ENCODE measurements at regions of chr9 and their contacts with region 1.

Region 1: DNA sequence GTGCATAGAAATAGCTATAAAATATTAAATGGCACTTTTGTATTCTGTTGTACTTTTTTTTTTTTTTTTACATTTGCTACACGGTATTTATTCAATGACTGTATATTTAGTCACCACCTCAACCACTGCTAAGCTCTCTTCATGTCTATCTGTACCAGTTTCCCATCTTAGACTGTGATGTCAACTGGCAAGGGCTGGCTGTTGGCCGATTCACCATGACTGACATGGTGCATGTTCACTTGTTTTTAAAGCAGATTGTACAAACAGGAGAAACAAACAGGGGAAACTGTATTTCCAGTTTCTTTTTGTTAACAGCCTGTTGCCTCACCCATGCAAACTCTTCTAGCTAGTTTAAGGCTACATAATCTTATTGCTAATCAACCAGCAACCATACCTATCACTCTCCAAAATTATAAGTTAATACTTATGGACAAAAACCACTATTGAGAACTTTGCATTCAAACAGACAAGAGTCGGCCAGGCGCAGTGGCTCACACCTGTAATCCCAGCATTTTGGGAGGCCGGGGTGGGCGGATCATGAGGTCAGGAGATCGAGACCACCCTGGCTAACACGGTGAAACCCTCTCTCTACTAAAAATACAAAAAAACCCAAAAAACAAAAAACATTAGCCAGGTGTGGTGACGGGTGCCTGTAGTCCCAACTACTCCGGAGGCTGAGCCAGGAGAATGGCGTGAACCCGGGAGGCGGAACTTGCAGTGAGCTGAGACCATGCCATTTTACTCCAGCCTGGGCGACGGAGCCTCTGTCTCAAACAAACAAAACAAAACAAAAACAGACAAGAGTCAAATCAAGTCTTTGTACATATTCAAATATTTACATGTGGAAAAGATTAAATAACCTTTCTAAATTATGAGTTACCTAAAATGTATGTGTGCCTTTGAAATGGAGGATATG is 13.2 kb downstream of the ZFAND5 start:
- DNase-seq: peak; percentile 28 to 66
- H3K4me3 ChIP-seq: no peak overlapping the region
- H3K27ac ChIP-seq: peak overlapping the region; percentile 16
- H3K4me1 ChIP-seq: 0 out of 2 replicates have a peak, but pooled peaks cover 9% of the 10 kb centered on the region
- H3K27me3 ChIP-seq: no peaks in the 10 kb centered on the region
- CTCF ChIP-seq: no peak

Region 2: DNA sequence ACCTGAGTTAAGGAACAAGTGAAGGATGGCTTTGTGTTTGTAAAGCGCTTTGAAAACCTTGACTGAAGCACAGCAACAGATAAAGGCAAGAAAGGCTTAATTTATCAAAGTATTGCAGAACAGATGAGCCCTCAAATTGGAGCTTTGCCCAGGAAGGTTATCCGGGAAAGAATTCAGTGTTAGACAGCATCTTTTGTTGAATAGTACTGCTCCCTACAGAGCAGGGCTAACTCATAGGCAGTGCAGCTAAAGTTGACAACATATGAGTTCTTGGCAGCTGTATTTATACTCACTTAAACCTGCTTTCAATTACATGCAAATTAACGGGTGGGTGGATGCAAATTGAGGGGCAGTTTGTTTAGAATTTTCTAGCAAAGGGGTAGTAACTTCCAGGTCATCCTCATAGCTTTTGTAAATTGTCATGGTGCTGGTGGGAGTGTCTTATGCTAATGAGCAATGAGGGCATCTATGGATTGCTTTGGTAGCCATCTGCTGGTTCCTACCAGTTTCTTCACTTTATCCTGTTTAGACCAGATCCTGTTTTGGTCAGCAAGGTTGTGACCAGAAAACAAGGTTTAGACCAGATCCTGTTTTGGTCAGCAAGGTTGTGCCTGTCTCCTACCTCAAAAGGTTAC is 96.8 kb before region 1 on chr9:
- CTCF ChIA-PET with region 1: no interaction called
- POLR2A ChIA-PET with region 1: no interaction called
- intact Hi-C with region 1: no loop called
- DNase-seq: no peak
- H3K4me3 ChIP-seq: no peak overlapping the region
- H3K27ac ChIP-seq: no peak overlapping the region
- H3K4me1 ChIP-seq: no peaks in the 10 kb centered on the region
- H3K27me3 ChIP-seq: no peaks in the 10 kb centered on the region
- CTCF ChIP-seq: no peak

Region 3: DNA sequence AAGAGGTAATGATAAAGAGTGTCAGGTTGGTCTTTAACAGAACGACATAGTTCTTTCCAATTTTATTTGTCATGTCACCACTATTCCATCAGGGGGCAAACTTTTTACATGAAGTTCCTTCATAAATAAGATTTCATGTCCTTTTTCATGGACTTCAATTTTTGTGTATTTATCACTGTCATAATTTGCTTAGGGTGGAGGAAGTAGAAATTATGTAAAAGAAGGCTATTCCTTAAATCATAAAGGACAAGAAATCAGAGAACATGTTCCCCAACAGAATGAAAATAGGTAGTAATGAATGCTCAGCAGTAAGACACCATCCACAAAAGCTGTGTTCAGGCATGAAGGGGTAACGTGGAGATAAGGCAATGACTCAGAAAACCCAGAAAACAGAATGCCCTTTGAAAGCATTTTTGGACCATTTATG is 59.5 kb before region 1 on chr9:
- CTCF ChIA-PET with region 1: interaction called, 3 read pairs
- POLR2A ChIA-PET with region 1: interaction called, 33 read pairs
- intact Hi-C with region 1: loop called (anchors 5 kb)
- DNase-seq: no peak
- H3K4me3 ChIP-seq: no peak overlapping the region
- H3K27ac ChIP-seq: no peak overlapping the region
- H3K4me1 ChIP-seq: peaks cover 26% of the 10 kb centered on the region
- H3K27me3 ChIP-seq: no peaks in the 10 kb centered on the region
- CTCF ChIP-seq: peak; percentile 71

Region 4: DNA sequence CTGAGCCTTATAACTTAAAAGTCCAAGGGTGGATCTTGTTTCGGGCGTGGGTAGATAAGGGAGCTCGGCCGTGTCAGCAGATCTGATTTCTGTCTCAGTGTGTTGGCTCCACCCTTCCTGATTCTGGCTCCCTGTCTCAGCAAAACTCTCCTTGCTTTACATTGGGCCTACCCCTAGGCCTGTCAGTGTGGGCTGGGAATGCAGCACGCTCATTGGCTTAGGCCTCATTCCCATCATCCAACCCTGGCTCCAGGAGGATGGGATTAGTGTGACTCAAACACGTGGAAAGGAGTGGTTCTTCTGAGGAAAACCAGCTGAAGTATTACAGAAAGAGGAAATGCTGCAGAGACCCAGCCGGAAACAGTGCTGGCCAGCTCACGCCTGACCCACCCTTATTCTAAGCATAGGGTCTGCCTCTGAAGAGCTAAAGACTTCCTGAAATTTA is 46.7 kb before region 1 on chr9:
- CTCF ChIA-PET with region 1: interaction called, 3 read pairs
- POLR2A ChIA-PET with region 1: interaction called, 4 read pairs
- intact Hi-C with region 1: loop called (anchors 5 kb)
- DNase-seq: peak; percentile 88 to 91
- H3K4me3 ChIP-seq: peak overlapping the region; percentile 25; the same call in 1 of the 2 replicates
- H3K27ac ChIP-seq: no peak overlapping the region
- H3K4me1 ChIP-seq: no peaks in the 10 kb centered on the region
- H3K27me3 ChIP-seq: no peaks in the 10 kb centered on the region
- CTCF ChIP-seq: no peak

Measured in PC-9 (cell line).